ENCODE measurements at regions of chr11 and their contacts with region 1.

Region 1: GRCh38 chr11:116276051-116277044 is 496.4 kb downstream of the BUD13 start:
- DNase-seq: peak; percentile 71 to 89
- ATAC-seq: peak; percentile 71
- H3K4me3 ChIP-seq: no peak overlapping the region
- H3K27ac ChIP-seq: no peak overlapping the region
- H3K4me1 ChIP-seq: no peaks in the 10 kb centered on the region
- H3K27me3 ChIP-seq: no peaks in the 10 kb centered on the region

Region 2: DNA sequence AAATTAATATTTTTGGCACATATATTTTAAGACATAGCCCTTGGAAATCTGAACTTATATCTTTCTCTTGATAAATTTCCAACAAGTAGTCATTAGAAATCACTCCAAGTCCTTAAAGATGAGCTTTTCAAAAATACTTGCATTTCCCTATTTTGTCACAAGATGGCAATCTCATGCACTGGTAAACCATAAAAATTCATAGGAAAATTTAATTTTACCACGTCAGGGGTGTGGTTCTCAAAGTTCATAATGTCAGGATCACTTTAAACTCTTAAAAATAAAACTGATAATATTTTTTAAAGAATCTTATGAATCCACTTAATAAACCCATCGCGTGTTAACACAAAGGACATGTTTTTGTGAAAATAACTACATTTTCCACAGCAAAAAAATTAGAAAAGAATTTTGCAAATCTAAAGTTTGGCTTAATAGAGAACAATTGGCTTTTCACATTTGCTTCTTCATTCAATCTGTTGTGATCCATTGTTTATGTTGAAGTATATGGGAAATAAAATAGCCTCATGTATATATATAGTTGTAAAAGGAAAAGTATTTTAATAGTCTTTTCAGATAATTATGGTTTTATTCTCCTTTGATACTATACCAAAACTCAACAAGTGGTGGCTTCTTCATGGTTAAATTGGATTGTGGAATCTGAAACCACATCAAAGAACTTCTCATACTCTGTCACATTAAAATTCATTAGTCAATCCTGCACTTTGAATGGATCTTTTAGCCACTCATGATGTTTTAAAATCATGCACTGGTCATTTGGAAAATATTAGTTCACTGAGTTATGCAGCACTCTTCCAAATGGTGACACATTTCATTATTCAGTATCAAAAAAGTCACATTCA is 941.2 kb before region 1 on chr11:
- intact Hi-C with region 1: loop called (anchors 5 kb)
- DNase-seq: no peak
- ATAC-seq: no peak
- H3K4me3 ChIP-seq: no peak overlapping the region
- H3K27ac ChIP-seq: no peak overlapping the region
- H3K4me1 ChIP-seq: peaks cover 0 to 1% of the 10 kb centered on the region in 2 donors
- H3K27me3 ChIP-seq: no peaks in the 10 kb centered on the region

Region 3: DNA sequence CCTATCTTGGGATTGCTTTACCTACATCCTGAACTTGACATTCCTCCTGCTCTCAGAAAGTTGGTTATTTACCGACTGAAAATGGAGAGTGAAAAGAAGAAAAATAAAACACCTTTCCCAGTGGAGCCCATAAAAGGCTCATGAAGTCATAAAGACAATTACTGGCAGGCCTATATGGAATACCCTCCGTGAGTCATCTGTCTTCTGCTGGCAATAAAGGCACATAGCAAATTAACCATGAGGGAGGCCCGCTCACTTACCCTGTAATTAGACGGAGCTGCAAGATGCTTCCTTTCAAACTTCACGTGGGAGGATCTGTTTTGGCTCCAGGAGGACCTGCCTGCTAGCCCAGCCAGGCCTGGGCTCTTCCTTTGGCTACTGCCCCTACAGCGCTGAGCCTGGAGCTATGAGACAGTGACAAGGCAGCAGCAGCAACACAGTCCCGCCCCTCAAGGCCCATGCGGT is 44.0 kb before region 1 on chr11:
- intact Hi-C with region 1: no loop called
- DNase-seq: no peak
- ATAC-seq: no peak
- H3K4me3 ChIP-seq: no peak overlapping the region
- H3K27ac ChIP-seq: no peak overlapping the region
- H3K4me1 ChIP-seq: no peaks in the 10 kb centered on the region
- H3K27me3 ChIP-seq: no peaks in the 10 kb centered on the region

Measured in aorta (tissue), 5 donors.